Sigmoid colon (tissue), 7 donors: ENCODE measurements at regions of chr6 and their contacts with region 1.

Region 1: DNA sequence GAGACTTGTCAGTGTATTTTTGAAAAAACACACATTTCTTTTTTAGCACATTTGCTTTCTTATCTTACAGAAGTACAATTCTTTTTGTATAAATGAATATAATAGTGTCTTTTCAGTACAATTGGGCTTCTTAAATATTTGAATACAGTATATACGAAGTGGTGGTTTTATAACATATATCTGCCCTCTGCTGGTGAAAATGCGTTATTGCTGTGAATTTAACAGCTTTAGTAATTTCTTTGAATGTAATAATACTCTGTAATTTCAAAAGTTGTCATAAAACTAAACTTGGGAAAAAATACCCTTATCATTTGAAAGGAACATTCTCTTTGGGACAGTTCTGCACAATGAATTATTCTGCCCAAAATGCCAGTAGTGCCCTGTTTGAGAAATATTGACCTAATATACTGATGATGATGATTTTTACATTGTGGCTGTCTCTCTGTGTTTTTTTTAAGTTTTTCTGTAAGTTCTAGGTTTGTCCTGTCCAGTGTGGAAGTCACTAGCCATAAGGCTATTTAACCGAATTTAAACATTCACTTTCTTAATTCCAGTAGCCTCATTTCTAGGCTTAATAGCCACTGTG is 19.0 kb downstream of the SMAP1 start:
- DNase-seq: no peak
- H3K4me3 ChIP-seq: no peak overlapping the region
- H3K27ac ChIP-seq: no peak overlapping the region
- H3K4me1 ChIP-seq: peaks cover 0 to 25% (median 4%) of the 10 kb centered on the region in 4 donors
- H3K27me3 ChIP-seq: no peaks in the 10 kb centered on the region
- CTCF ChIP-seq: peak; percentile 46 to 75 (median 50)
- EP300 ChIP-seq: no peak
- POLR2A ChIP-seq: no peak

Region 2: GRCh38 chr6:70310063-70310694 is 376.5 kb before region 1 on chr6:
- intact Hi-C with region 1: no loop called
- DNase-seq: no peak
- H3K4me3 ChIP-seq: no peak overlapping the region
- H3K27ac ChIP-seq: no peak overlapping the region
- H3K4me1 ChIP-seq: no peaks in the 10 kb centered on the region
- H3K27me3 ChIP-seq: no peaks in the 10 kb centered on the region
- CTCF ChIP-seq: peak in 2 of 4 experiments; percentile 28 to 44
- EP300 ChIP-seq: no peak
- POLR2A ChIP-seq: no peak

Region 3: GRCh38 chr6:70547313-70547712 is 139.3 kb before region 1 on chr6:
- intact Hi-C with region 1: loop called (anchors 5 kb)
- DNase-seq: no peak
- H3K4me3 ChIP-seq: no peak overlapping the region
- H3K27ac ChIP-seq: no peak overlapping the region
- H3K4me1 ChIP-seq: no peaks in the 10 kb centered on the region
- H3K27me3 ChIP-seq: no peaks in the 10 kb centered on the region
- CTCF ChIP-seq: peak in 1 of 4 experiments; percentile 20
- EP300 ChIP-seq: no peak
- POLR2A ChIP-seq: no peak

Region 4: GRCh38 chr6:70566751-70567382 is 119.8 kb before region 1 on chr6 and contains the start of gene SDHAF4:
- intact Hi-C with region 1: loop called (anchors 5 kb)
- DNase-seq: peak; percentile 96
- H3K4me3 ChIP-seq: peak within 1 kb of the TSS; percentile 71 to 84 (median 82)
- H3K27ac ChIP-seq: peak within 1 kb of the TSS; percentile 86 to 92 (median 90)
- H3K4me1 ChIP-seq: peaks cover 0 to 16% (median 4%) of the 10 kb centered on the region in 4 donors
- H3K27me3 ChIP-seq: no peaks in the 10 kb centered on the region
- CTCF ChIP-seq: peak in 1 of 4 experiments; percentile 17
- EP300 ChIP-seq: no peak
- POLR2A ChIP-seq: peak; percentile 31 to 54
- total RNA-seq, gene SDHAF4: 4.9 to 11.1 (median 6.0) TPM